ENCODE measurements at regions of chr11 and their contacts with region 1.

Region 1: DNA sequence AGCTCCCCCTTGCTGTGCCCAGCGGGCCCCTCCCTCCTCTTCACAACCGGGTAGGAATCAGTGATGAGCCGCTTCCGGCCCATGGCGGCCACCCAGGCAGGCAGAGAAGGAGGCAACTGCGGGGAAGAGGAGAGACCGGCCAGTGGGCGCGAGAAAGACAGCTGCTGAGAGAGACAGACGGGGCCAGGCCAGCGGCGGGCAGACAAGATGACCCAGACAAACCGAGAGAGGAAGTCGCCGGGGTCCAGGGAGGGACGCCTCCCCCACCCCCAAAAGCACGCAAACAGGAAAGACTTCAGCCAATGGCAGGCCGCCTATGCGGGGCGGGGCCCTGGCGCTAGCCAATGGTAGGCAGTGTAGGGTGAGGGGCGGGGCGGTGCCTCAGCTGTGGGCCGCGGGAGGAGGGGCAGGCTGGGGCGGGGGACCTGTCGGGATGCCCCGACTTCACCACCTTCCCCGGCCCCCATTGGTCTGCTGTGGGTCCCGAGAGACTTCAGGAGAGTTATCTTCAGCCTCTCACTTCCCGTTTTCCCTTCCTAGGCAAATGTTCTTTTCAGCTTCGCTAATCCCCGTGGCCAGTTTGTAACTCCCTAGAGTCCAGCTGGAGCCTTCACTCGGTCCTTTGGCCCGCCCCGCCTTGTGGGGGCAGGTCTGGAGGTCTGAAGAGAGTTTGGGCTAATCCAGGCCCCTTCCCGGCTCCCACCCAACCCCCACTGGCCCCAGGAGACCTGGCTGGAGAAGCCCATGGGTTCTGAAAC is at the start of gene POLD4:
- DNase-seq: peak; percentile 95
- ATAC-seq: peak; percentile 85
- H3K4me3 ChIP-seq: peak within 1 kb of the TSS; percentile 98
- H3K27ac ChIP-seq: peak within 1 kb of the TSS; percentile 99
- H3K4me1 ChIP-seq: peaks cover 52% of the 10 kb centered on the region
- H3K27me3 ChIP-seq: no peaks in the 10 kb centered on the region; a peak in 1 of 4 replicates
- CTCF ChIP-seq: no peak
- EP300 ChIP-seq: peak; percentile 58 to 67; a peak in 2 of 4 replicates
- POLR2A ChIP-seq: peak; percentile 97
- RAD21 ChIP-seq: no peak
- polyA plus RNA-seq, gene POLD4: 8.1 to 23.5 TPM

Region 2: GRCh38 chr11:67022328-67022927 is 331.1 kb before region 1 on chr11:
- CTCF ChIA-PET with region 1: no interaction called
- POLR2A ChIA-PET with region 1: no interaction called
- RAD21 ChIA-PET with region 1: no interaction called
- SMC1A ChIA-PET with region 1: no interaction called
- in situ Hi-C with region 1: no loop called
- intact Hi-C with region 1: no loop called
- DNase-seq: no peak
- ATAC-seq: no peak
- H3K4me3 ChIP-seq: no peak overlapping the region
- H3K27ac ChIP-seq: no peak overlapping the region
- H3K4me1 ChIP-seq: peaks cover 23% of the 10 kb centered on the region
- H3K27me3 ChIP-seq: peaks cover 0 to 8% of the 10 kb centered on the region in 2 experiments; a peak in 3 of 4 replicates
- CTCF ChIP-seq: no peak
- EP300 ChIP-seq: no peak
- POLR2A ChIP-seq: no peak
- RAD21 ChIP-seq: no peak

Region 3: GRCh38 chr11:67239783-67240575 is 113.5 kb before region 1 on chr11:
- CTCF ChIA-PET with region 1: interaction called, 3 read pairs
- POLR2A ChIA-PET with region 1: interaction called, 13 read pairs
- RAD21 ChIA-PET with region 1: interaction called, 7 read pairs
- SMC1A ChIA-PET with region 1: interaction called, 4 read pairs
- in situ Hi-C with region 1: no loop called
- intact Hi-C with region 1: no loop called
- DNase-seq: peak; percentile 93
- ATAC-seq: peak; percentile 93
- H3K4me3 ChIP-seq: peak overlapping the region; percentile 89
- H3K27ac ChIP-seq: peak overlapping the region; percentile 90
- H3K4me1 ChIP-seq: peaks cover 17% of the 10 kb centered on the region
- H3K27me3 ChIP-seq: no peaks in the 10 kb centered on the region
- CTCF ChIP-seq: peak in 1 of 3 experiments; percentile 6; a peak in 1 of 6 replicates
- EP300 ChIP-seq: peak in 1 of 2 experiments; percentile 27; a peak in 1 of 4 replicates
- POLR2A ChIP-seq: peak; percentile 96
- RAD21 ChIP-seq: 0 out of 2 replicates have a peak, but pooled peaks have one; percentile 11

Region 4: GRCh38 chr11:67288452-67289225 is 64.9 kb before region 1 on chr11:
- CTCF ChIA-PET with region 1: interaction called, 4 read pairs
- POLR2A ChIA-PET with region 1: interaction called, 10 read pairs
- RAD21 ChIA-PET with region 1: interaction called, 3 read pairs
- SMC1A ChIA-PET with region 1: interaction called, 3 read pairs
- in situ Hi-C with region 1: no loop called
- intact Hi-C with region 1: no loop called
- DNase-seq: peak; percentile 61
- ATAC-seq: peak; percentile 88
- H3K4me3 ChIP-seq: peak overlapping the region; percentile 97
- H3K27ac ChIP-seq: peak overlapping the region; percentile 99
- H3K4me1 ChIP-seq: peaks cover 26% of the 10 kb centered on the region
- H3K27me3 ChIP-seq: no peaks in the 10 kb centered on the region
- CTCF ChIP-seq: peak in 2 of 3 experiments; percentile 24 to 75; a peak in 4 of 6 replicates
- EP300 ChIP-seq: peak; percentile 17 to 67; a peak in 1 of 4 replicates
- POLR2A ChIP-seq: peak; percentile 93
- RAD21 ChIP-seq: peak; percentile 68

Region 5: DNA sequence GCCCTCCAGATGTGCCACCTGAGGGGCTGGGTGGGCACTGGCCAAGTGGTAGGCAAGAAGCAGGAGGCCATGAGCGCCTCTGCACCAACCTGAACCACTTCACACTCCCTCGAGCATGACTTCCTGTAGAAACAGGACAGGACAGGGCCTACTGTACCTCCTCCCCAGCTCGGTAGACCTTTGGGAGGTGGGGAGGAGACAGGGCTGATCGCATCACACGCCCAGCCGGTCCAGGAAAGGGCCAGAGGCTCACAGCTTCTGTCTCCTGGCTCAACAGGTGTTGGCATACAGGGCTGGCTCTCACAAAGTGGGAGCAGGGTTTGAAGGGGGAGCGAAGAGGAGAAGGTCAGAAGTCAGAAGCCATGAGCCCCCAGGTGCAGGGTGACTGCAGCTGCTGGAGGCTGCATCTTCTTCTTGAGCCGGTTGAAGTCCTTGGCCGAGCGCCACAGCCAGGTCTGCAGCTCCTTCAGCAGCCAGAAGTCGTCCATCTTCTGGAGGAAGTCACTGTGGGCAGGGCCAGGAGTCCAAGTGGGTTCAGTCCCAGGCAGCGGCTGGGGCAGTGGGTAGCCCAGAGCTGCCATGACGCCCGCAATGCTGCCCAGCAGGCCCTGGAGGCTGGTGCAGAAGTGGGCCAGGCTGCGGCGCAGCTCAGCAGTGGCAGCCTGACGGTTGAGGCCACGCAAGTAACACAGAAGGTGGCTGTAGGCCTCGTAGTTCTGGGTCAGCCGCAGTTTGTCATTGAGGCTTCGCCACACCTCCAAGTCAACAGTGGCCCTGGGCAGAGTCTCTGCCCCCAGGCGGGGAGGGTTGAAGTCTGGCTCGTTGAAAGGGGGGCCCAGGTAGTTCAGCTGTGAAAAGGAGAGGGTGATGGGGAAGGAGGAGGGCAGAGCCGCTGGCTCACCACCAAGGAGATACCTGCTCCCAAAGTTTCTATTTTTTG is 11.6 kb after region 1 on chr11:
- CTCF ChIA-PET with region 1: interaction called, 1,301 read pairs
- POLR2A ChIA-PET with region 1: interaction called, 42 read pairs
- RAD21 ChIA-PET with region 1: interaction called, 122 read pairs
- SMC1A ChIA-PET with region 1: interaction called, 646 read pairs
- in situ Hi-C with region 1: no loop called
- intact Hi-C with region 1: loop called (anchors 2 kb)
- DNase-seq: no peak
- ATAC-seq: peak; percentile 11; the same call in 1 of the 3 replicates
- H3K4me3 ChIP-seq: no peak overlapping the region
- H3K27ac ChIP-seq: no peak overlapping the region
- H3K4me1 ChIP-seq: peaks cover 11% of the 10 kb centered on the region
- H3K27me3 ChIP-seq: peaks cover 1 to 4% of the 10 kb centered on the region in 2 experiments; a peak in 3 of 4 replicates
- CTCF ChIP-seq: no peak
- EP300 ChIP-seq: no peak
- POLR2A ChIP-seq: no peak
- RAD21 ChIP-seq: no peak

Region 6: DNA sequence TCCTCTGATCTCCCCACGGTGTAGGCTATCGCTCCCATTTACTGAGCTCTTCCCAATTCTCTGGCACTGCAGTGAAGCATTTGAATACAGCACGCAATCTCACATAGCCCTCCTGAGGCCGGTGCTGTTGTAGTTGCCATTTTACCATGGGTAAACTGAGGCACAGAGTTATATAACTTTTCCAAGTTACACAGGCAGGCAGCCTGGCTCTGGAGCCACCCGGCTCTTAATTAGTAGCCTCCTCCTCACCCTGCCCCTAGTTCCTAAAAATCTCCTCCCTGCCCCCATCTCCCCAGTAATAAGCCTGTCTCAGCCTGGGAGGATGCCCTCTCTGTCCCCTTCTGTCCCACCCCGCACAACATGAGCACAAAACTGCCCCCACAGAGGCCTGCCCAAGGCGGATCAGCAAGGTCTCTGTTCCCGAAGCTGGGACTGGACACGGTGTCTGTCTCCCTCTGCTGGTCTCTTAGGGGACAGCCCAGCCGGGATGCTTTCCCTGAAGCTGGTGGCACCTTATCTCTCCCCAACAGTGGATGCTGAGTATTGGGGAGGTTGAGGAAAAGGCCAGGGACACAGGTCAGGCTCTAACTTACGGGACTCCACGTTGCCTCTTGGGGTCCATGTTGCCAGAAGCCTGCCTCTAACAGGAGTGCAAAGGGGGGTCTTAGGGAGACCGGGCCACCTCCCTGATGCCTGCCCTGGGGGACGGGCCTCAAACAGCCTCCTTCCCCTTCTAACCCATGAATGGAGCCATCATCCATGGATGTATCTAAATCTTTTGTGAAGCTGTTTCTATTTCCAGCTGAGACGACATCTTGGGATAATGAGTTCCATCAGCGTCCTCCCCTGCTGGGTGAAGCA is 29.0 kb after region 1 on chr11:
- CTCF ChIA-PET with region 1: interaction called, 1,301 read pairs
- POLR2A ChIA-PET with region 1: interaction called, 183 read pairs
- RAD21 ChIA-PET with region 1: interaction called, 525 read pairs
- SMC1A ChIA-PET with region 1: interaction called, 646 read pairs
- in situ Hi-C with region 1: loop called (anchors 5 kb)
- intact Hi-C with region 1: loop called (anchors 1 kb)
- DNase-seq: no peak
- ATAC-seq: peak; percentile 93
- H3K4me3 ChIP-seq: no peak overlapping the region
- H3K27ac ChIP-seq: no peak overlapping the region
- H3K4me1 ChIP-seq: peaks cover 19% of the 10 kb centered on the region
- H3K27me3 ChIP-seq: peaks cover 0 to 3% of the 10 kb centered on the region in 2 experiments; a peak in 2 of 4 replicates
- CTCF ChIP-seq: peak; percentile 99; a peak in 5 of 6 replicates
- EP300 ChIP-seq: no peak
- POLR2A ChIP-seq: no peak
- RAD21 ChIP-seq: peak; percentile 99

Region 7: GRCh38 chr11:67401495-67402191 is 48.1 kb after region 1 on chr11 and contains the start of gene PPP1CA:
- CTCF ChIA-PET with region 1: interaction called, 9 read pairs
- POLR2A ChIA-PET with region 1: interaction called, 55 read pairs
- RAD21 ChIA-PET with region 1: interaction called, 27 read pairs
- SMC1A ChIA-PET with region 1: interaction called, 5 read pairs
- in situ Hi-C with region 1: no loop called
- intact Hi-C with region 1: loop called (anchors 1 kb)
- DNase-seq: no peak
- ATAC-seq: peak; percentile 77
- H3K4me3 ChIP-seq: peak within 1 kb of the TSS; percentile 80
- H3K27ac ChIP-seq: peak within 1 kb of the TSS; percentile 99
- H3K4me1 ChIP-seq: peaks cover 50% of the 10 kb centered on the region
- H3K27me3 ChIP-seq: no peaks in the 10 kb centered on the region
- CTCF ChIP-seq: peak in 2 of 3 experiments; percentile 36 to 41; a peak in 3 of 6 replicates
- EP300 ChIP-seq: no peak
- POLR2A ChIP-seq: peak; percentile 96
- RAD21 ChIP-seq: peak; percentile 31; the same call in 1 of the 2 replicates
- polyA plus RNA-seq, gene PPP1CA: 26.4 to 41.7 TPM

Region 8: DNA sequence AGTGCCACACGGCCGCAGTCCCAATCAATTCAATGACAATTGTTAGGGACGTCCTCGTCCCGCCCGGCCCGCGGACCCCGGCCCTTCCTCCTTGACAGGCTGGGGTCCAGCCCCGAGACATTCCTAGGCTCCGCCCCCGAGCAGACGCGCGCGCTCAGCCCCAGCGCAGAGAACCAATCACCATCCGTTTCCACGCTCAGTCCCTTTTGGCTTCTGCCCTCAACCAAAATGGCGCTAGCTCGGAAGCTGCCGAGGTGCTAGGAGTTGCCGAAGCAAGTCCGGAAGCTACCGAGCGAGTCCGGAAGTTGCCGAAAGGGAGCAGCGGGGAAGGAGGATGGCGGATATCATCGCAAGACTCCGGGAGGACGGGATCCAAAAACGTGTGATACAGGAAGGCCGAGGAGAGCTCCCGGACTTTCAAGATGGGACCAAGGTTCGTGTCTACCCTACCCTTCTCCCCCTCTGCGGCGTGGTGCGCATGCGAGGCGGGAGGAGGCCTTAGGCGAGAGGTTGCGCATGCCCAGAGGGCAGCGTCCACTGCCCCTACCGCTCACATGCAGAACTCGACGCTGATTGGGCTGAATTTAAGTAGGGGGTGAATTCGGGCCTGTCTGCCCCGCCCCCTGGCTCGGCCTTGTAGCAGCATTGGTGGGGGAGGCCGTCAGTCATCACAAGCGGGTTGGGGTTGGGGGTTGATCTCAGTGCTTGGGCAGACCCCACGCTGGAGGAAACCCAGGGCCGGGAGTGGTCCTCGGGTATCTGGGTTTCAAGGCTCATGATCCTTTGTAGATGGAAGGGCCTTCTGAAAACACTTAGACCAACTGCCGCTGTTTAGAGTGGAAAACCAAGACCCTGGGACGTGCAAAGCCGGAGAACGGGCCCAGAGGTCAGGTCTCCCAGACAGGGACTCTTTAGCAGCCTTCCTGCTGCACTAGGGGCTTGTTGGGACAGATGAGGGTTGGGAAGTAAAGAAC is 129.6 kb after region 1 on chr11 and contains the start of gene AIP:
- CTCF ChIA-PET with region 1: interaction called, 7 read pairs
- POLR2A ChIA-PET with region 1: interaction called, 18 read pairs
- RAD21 ChIA-PET with region 1: interaction called, 20 read pairs
- SMC1A ChIA-PET with region 1: interaction called, 6 read pairs
- in situ Hi-C with region 1: no loop called
- intact Hi-C with region 1: loop called (anchors 2 kb)
- DNase-seq: peak; percentile 97
- ATAC-seq: peak; percentile 77
- H3K4me3 ChIP-seq: peak within 1 kb of the TSS; percentile 67
- H3K27ac ChIP-seq: peak within 1 kb of the TSS; percentile 70
- H3K4me1 ChIP-seq: peaks cover 43% of the 10 kb centered on the region
- H3K27me3 ChIP-seq: no peaks in the 10 kb centered on the region
- CTCF ChIP-seq: peak in 1 of 3 experiments; percentile 19; a peak in 1 of 6 replicates
- EP300 ChIP-seq: no peak
- POLR2A ChIP-seq: peak; percentile 78
- RAD21 ChIP-seq: no peak
- polyA plus RNA-seq, gene AIP: 12.6 to 29.7 TPM

Measured in GM12878 (cell line).